Activated CD4-positive, alpha-beta T cell treated with anti-CD3 and anti-CD28 coated beads, Interleukin-2, amount 10 ng/mL, durations not matched to agents 24 days and 14 days (primary cell): ENCODE measurements at regions of chr5 and their contacts with region 1.

Region 1: GRCh38 chr5:14664302-14665100 is at the start of gene OTULIN:
- DNase-seq: peak; percentile 96
- H3K4me3 Mint-ChIP-seq: peak within 1 kb of the TSS; percentile 96
- H3K27ac Mint-ChIP-seq: peak within 1 kb of the TSS; percentile 99
- H3K4me1 Mint-ChIP-seq: peaks cover 59% of the 10 kb centered on the region
- H3K27me3 Mint-ChIP-seq: no peaks in the 10 kb centered on the region
- total RNA-seq, gene OTULIN: 52.5 and 62.1 TPM in 2 replicates

Region 2: GRCh38 chr5:14374100-14374499 is 290.4 kb before region 1 on chr5:
- intact Hi-C with region 1: no loop called
- DNase-seq: no peak
- H3K4me3 Mint-ChIP-seq: no peak overlapping the region
- H3K27ac Mint-ChIP-seq: no peak overlapping the region
- H3K4me1 Mint-ChIP-seq: peaks cover under 1% of the 10 kb centered on the region
- H3K27me3 Mint-ChIP-seq: peaks cover 7% of the 10 kb centered on the region

Region 3: DNA sequence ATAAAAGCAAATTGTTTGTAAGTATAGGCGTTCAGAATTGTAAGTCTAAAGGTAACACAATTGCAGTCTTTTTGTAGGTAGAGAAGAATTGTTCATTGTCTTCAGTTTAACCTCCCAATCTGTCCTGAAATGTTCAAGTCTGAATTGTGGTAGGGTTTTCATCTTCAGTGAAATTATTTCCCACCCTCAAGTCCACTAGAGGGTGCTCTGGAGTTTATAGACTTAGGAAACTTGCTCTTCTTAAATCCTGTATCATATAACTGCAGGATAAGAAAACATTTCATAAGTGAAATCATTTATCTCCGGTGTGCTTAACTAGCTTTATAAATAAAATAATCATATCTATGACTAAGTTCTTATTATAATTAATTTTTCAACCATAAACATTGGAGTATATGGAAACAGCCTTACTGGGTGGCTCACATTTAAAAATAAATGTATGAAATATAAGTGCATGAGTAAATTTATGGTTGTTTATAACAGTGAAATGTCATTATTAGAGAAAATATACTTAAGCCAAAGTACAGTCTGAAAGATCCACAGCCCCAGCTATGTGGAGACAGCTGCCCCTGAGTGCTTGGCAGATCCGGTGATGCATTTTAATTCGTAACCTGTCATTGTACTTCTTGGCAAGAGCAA is 265.3 kb before region 1 on chr5:
- intact Hi-C with region 1: loop called (anchors 5 kb)
- DNase-seq: peak; percentile 82
- H3K4me3 Mint-ChIP-seq: no peak overlapping the region
- H3K27ac Mint-ChIP-seq: no peak overlapping the region
- H3K4me1 Mint-ChIP-seq: peaks cover 34% of the 10 kb centered on the region
- H3K27me3 Mint-ChIP-seq: no peaks in the 10 kb centered on the region

Region 4: GRCh38 chr5:14489642-14490041 is 174.9 kb before region 1 on chr5:
- intact Hi-C with region 1: loop called (anchors 10 kb)
- DNase-seq: no peak
- H3K4me3 Mint-ChIP-seq: no peak overlapping the region
- H3K27ac Mint-ChIP-seq: no peak overlapping the region
- H3K4me1 Mint-ChIP-seq: peaks cover 1% of the 10 kb centered on the region
- H3K27me3 Mint-ChIP-seq: no peaks in the 10 kb centered on the region

Region 5: DNA sequence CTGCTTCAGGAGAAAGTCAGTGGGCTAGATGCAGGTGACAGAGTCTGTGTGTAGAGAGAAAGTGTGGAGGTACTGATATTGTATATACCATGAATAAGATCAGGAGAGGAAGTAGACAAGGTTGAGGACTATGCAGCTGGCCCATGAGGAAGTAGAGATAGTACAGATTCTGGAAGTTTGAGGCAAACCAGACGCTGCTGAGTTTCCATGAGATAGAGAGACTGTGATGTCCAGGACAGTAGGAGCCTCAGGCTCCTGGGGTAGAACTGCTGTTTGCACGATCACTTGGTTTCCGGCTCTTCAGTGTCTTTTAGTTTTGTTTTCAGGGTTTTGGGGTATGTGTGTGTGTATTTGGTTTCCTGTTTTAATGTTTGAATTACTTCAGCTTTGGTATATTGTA is 69.3 kb before region 1 on chr5:
- intact Hi-C with region 1: loop called (anchors 2 kb)
- DNase-seq: peak; percentile 89
- H3K4me3 Mint-ChIP-seq: peak overlapping the region; percentile 78
- H3K27ac Mint-ChIP-seq: peak overlapping the region; percentile 94
- H3K4me1 Mint-ChIP-seq: peaks cover 78% of the 10 kb centered on the region
- H3K27me3 Mint-ChIP-seq: no peaks in the 10 kb centered on the region

Region 6: GRCh38 chr5:14685757-14686156 is 21.3 kb after region 1 on chr5:
- intact Hi-C with region 1: loop called (anchors 2 kb)
- DNase-seq: peak; percentile 83
- H3K4me3 Mint-ChIP-seq: no peak overlapping the region
- H3K27ac Mint-ChIP-seq: peak overlapping the region; percentile 42
- H3K4me1 Mint-ChIP-seq: peaks cover 15% of the 10 kb centered on the region
- H3K27me3 Mint-ChIP-seq: no peaks in the 10 kb centered on the region

Region 7: DNA sequence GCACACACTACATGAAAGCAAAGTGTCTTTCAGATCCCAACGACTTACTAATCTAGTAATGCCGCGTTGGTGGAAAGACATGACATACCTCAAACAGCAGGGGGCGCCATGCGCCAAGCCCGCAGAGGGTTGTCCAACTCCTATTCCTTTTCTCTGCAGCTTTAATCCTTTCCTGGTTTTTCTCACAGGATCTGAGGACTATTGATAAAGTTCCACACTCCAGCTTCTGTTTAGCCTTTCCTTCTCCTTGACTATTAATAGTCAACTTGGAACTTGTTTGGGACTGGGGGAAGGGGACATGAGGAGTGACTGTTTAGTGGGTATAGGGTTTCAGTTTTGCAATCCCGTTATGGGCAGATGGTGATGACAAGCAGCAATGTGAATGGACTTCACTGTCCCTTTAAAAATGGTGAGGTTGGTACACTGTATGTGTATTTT is 62.9 kb after region 1 on chr5:
- intact Hi-C with region 1: no loop called
- DNase-seq: peak; percentile 92
- H3K4me3 Mint-ChIP-seq: no peak overlapping the region
- H3K27ac Mint-ChIP-seq: no peak overlapping the region
- H3K4me1 Mint-ChIP-seq: peaks cover 4% of the 10 kb centered on the region
- H3K27me3 Mint-ChIP-seq: no peaks in the 10 kb centered on the region

Region 8: GRCh38 chr5:14809369-14810155 is 145.1 kb after region 1 on chr5:
- intact Hi-C with region 1: loop called (anchors 1 kb)
- DNase-seq: peak; percentile 93
- H3K4me3 Mint-ChIP-seq: peak overlapping the region; percentile 65
- H3K27ac Mint-ChIP-seq: peak overlapping the region; percentile 80
- H3K4me1 Mint-ChIP-seq: peaks cover 37% of the 10 kb centered on the region
- H3K27me3 Mint-ChIP-seq: peaks cover 4% of the 10 kb centered on the region